Right lobe of liver (tissue), 6 donors: ENCODE measurements at regions of chr11 and their contacts with region 1.

Region 1: DNA sequence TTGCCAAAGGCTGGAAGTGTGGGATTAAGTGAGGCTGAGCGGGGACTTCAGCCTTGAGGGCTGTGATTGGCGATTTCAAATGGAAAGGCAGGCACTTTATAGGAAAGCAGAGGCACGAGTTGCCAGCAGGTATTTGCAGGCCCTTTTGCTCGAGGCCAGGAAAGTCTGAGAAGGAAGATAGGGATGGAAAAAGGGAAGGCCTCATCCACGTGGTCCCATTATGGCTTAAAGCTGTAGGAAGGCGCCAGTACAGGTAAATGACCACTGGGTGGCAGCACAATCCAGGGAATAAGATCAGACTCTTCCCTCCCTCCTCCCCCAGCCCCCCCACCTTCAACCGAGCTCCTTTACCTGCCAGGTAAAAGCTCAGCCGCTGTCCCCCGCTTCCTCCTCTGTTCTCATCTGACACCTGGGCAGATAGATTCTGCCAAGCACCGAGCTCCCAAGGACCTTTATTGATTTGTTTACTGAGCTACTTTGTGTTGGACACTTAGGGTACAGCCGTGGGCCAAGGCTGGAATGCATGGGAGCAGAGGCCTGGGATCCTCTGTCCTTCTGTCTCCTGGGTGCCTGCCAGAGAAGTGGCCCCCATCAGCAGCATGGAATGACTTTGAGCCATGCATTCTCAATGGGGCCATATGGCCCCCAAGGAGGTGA is 7.5 kb downstream of the P2RX3 start:
- DNase-seq: peak; percentile 51 to 76 (median 59)
- ATAC-seq: peak; percentile 86 to 89 (median 88)
- H3K4me3 ChIP-seq: no peak overlapping the region
- H3K27ac ChIP-seq: no peak overlapping the region
- H3K4me1 ChIP-seq: no peaks in the 10 kb centered on the region
- H3K27me3 ChIP-seq: no peaks in the 10 kb centered on the region
- CTCF ChIP-seq: peak; percentile 68 to 84 (median 81)
- POLR2A ChIP-seq: no peak

Region 2: GRCh38 chr11:57480409-57481137 is 134.9 kb after region 1 on chr11:
- intact Hi-C with region 1: loop called in 1 of 2 experiments (anchors 10 kb)
- DNase-seq: peak; percentile 72 to 76 (median 73)
- ATAC-seq: peak; percentile 51 to 60 (median 52)
- H3K4me3 ChIP-seq: no peak overlapping the region
- H3K27ac ChIP-seq: peak overlapping the region in 2 of 3 donors; percentile 18 to 46
- H3K4me1 ChIP-seq: peaks cover 0 to 48% (median 15%) of the 10 kb centered on the region in 4 donors
- H3K27me3 ChIP-seq: no peaks in the 10 kb centered on the region
- CTCF ChIP-seq: peak; percentile 73 to 80 (median 75)
- POLR2A ChIP-seq: peak; percentile 4